Endothelial cell of umbilical vein (primary cell): ENCODE measurements at regions of chr20 and their contacts with region 1.

Region 1: GRCh38 chr20:58236612-58237330 is 8.3 kb upstream of the ANKRD60 start:
- DNase-seq: peak; percentile 66
- H3K4me3 ChIP-seq: peak overlapping the region; percentile 39 to 84 (median 83)
- H3K27ac ChIP-seq: peak overlapping the region; percentile 28
- H3K4me1 ChIP-seq: peaks cover 13% of the 10 kb centered on the region
- H3K27me3 ChIP-seq: no peaks in the 10 kb centered on the region
- CTCF ChIP-seq: peak; percentile 94 to 98
- POLR2A ChIP-seq: peak; percentile 16

Region 2: DNA sequence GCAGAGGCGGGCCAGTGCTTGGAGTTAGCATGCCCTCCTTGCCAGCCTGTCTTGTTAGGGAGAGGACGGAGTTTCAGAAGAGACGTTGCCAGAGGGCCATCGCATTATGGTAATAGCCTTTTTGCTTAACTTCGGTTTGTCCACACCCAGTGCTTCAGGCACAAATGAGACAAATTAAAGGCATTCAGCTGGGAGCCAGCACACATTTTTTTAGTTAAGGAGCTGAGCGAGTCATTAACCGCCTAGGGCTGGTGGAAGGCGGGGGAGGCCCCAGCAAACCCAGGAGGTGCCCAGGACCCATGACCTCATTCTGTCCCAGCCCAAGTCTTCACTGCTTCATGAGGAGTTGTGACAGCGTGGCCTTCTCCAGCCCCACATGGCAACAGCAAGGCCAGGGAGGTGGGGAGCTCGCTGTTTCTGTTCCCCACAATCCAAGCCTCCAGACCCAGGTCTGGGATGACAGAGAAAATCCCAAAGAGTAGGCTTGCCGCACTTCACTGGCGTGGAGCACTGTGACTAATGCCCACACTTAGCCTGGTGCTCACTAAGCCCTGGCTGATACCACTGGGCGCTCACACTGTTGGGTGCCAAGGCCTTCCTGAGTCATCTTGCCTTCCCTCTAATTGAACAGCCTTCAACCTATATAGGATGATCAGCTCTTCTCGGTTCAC is 245.4 kb before region 1 on chr20:
- CTCF ChIA-PET with region 1: no interaction called
- POLR2A ChIA-PET with region 1: no interaction called
- dilution Hi-C with region 1: no loop called
- intact Hi-C with region 1: no loop called
- DNase-seq: no peak
- H3K4me3 ChIP-seq: no peak overlapping the region
- H3K27ac ChIP-seq: no peak overlapping the region
- H3K4me1 ChIP-seq: no peaks in the 10 kb centered on the region
- H3K27me3 ChIP-seq: peaks cover 0 to 4% of the 10 kb centered on the region in 2 experiments
- CTCF ChIP-seq: no peak
- POLR2A ChIP-seq: no peak

Region 3: DNA sequence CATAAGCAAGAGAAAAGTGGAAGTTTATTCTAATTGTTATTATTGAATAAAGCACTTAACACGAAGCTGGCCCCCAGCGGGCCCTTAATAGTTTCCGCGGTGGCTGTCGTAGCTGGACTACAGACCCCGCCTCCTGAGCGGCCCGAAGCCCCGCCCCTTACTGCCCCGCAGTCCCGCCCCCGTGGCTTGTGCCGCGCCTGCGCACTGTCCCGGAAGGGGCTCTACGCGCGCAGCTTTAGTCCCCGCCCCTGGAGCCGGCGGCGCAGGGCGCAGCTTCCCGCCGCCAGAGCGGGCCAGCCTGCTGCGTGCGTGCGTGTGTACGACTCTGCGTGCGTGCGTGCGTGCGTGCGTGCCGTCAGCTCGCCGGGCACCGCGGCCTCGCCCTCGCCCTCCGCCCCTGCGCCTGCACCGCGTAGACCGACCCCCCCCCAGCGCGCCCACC is 152.1 kb after region 1 on chr20 and contains the start of gene VAPB:
- CTCF ChIA-PET with region 1: interaction called, 8 read pairs
- POLR2A ChIA-PET with region 1: interaction called, 4 read pairs
- dilution Hi-C with region 1: no loop called
- intact Hi-C with region 1: loop called (anchors 5 kb)
- DNase-seq: peak; percentile 97
- H3K4me3 ChIP-seq: peak within 1 kb of the TSS; percentile 54 to 98 (median 81)
- H3K27ac ChIP-seq: peak within 1 kb of the TSS; percentile 74
- H3K4me1 ChIP-seq: peaks cover 14% of the 10 kb centered on the region
- H3K27me3 ChIP-seq: no peaks in the 10 kb centered on the region
- CTCF ChIP-seq: no peak
- POLR2A ChIP-seq: peak; percentile 76
- total RNA-seq, gene VAPB: 47.8 and 48.9 TPM in 2 replicates

Region 4: DNA sequence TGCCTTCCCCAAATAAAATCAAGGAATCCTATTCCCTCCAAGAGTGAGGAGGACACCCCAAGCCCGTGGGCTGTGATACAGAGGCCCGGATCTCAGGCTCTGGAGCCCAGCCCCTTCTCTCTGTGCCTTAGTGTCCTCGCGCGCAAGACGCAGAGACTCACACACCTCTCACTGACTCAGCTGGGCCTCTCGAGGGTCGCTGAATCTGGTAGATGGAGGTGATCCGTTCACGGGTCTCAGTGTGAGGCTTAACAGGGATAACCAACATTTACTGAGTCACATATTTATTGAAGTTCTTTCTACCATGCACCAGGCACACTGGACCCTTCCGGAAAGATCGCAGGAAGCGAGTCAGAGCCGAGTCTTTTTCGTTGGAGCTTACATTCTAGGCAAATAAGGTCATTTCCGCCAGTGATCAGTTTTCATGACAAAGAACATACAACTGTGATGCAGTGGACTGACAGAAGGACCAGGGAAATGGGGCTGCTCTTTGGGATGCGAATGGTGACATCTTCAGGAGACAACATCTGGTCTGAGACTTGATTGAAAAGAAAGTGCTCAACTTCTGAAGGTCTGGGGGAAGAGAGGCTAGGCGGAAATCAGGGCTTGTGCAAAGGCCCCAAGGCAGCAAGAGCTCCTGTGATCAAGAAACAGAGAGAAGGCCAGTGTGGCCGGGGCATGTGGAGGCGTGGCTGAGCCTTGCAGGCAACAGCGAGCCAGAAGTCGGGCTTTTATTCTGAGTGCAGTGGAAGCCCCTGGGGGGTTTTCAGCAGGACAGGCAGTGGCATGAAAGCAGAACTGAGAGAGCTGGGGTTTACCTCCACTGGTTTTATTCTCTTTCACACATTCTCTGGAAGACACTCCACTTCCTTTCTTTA is 221.6 kb after region 1 on chr20:
- CTCF ChIA-PET with region 1: interaction called, 3 read pairs
- POLR2A ChIA-PET with region 1: no interaction called
- dilution Hi-C with region 1: loop called (anchors 25 kb)
- intact Hi-C with region 1: no loop called
- DNase-seq: peak; percentile 66
- H3K4me3 ChIP-seq: no peak overlapping the region
- H3K27ac ChIP-seq: peak overlapping the region; percentile 55
- H3K4me1 ChIP-seq: peaks cover 22% of the 10 kb centered on the region
- H3K27me3 ChIP-seq: no peaks in the 10 kb centered on the region
- CTCF ChIP-seq: no peak
- POLR2A ChIP-seq: no peak

Region 5: GRCh38 chr20:58850693-58851174 is 614.0 kb after region 1 on chr20 and contains the start of gene GNAS-AS1:
- CTCF ChIA-PET with region 1: no interaction called
- POLR2A ChIA-PET with region 1: no interaction called
- dilution Hi-C with region 1: loop called (anchors 25 kb)
- intact Hi-C with region 1: loop called (anchors 10 kb)
- DNase-seq: no peak
- H3K4me3 ChIP-seq: no peak within 1 kb of the TSS
- H3K27ac ChIP-seq: no peak within 1 kb of the TSS
- H3K4me1 ChIP-seq: no peaks in the 10 kb centered on the region
- H3K27me3 ChIP-seq: peaks cover 44 to 46% of the 10 kb centered on the region in 2 experiments
- CTCF ChIP-seq: no peak
- POLR2A ChIP-seq: no peak
- total RNA-seq, gene GNAS-AS1: 0.58 and 0.74 TPM in 2 replicates